ENCODE measurements at regions of chr2 and their contacts with region 1.

Region 1: GRCh38 chr2:20225294-20226151 is 593 bp upstream of the SDC1 start:
- DNase-seq: peak; percentile 54
- ATAC-seq: peak; percentile 77
- H3K4me3 Mint-ChIP-seq: peak overlapping the region; percentile 43
- H3K27ac Mint-ChIP-seq: no peak overlapping the region
- H3K4me1 Mint-ChIP-seq: peaks cover 6% of the 10 kb centered on the region
- H3K27me3 Mint-ChIP-seq: peaks cover 67% of the 10 kb centered on the region

Region 2: GRCh38 chr2:20135631-20136050 is 89.9 kb before region 1 on chr2:
- CTCF ChIA-PET with region 1: interaction called, 14 read pairs
- DNase-seq: peak; percentile 61
- ATAC-seq: no peak
- H3K4me3 Mint-ChIP-seq: no peak overlapping the region
- H3K27ac Mint-ChIP-seq: no peak overlapping the region
- H3K4me1 Mint-ChIP-seq: no peaks in the 10 kb centered on the region
- H3K27me3 Mint-ChIP-seq: peaks cover 17% of the 10 kb centered on the region

Region 3: GRCh38 chr2:20172273-20173055 is 53.1 kb before region 1 on chr2:
- CTCF ChIA-PET with region 1: no interaction called
- DNase-seq: no peak
- ATAC-seq: no peak
- H3K4me3 Mint-ChIP-seq: no peak overlapping the region
- H3K27ac Mint-ChIP-seq: no peak overlapping the region
- H3K4me1 Mint-ChIP-seq: no peaks in the 10 kb centered on the region
- H3K27me3 Mint-ChIP-seq: peaks cover 6% of the 10 kb centered on the region

Region 4: DNA sequence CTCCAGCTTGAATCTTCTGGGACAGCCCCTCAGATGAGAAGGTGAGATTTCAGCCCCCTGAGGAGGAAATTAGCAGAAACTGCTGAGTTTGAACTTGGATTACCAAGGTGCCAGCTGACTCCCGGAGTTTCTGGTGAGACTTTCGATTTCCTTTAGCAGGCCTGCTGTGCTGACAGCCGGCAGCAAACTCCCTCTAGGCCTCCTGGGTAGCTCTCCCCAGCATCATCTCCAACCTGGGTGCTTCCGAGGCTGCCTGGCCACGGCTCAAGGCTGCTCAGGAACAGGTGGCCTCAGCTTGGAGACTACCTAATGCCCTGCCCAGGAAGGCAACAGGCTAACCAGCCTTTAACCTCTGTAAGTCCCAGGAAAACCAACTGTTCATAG is 17.1 kb before region 1 on chr2:
- CTCF ChIA-PET with region 1: interaction called, 10 read pairs
- DNase-seq: no peak
- ATAC-seq: no peak
- H3K4me3 Mint-ChIP-seq: no peak overlapping the region
- H3K27ac Mint-ChIP-seq: no peak overlapping the region
- H3K4me1 Mint-ChIP-seq: peaks cover 4% of the 10 kb centered on the region
- H3K27me3 Mint-ChIP-seq: no peaks in the 10 kb centered on the region